Activated CD4-positive, alpha-beta memory T cell treated with anti-CD3 and anti-CD28 coated beads for 36 hours (primary cell): ENCODE measurements at regions of chr13 and their contacts with region 1.

Region 1: GRCh38 chr13:74133657-74134201 is 475 bp downstream of the KLF12 start:
- DNase-seq: peak; percentile 91
- H3K4me3 Mint-ChIP-seq: peak overlapping the region; percentile 100
- H3K27ac Mint-ChIP-seq: peak overlapping the region; percentile 100
- H3K4me1 Mint-ChIP-seq: peaks cover 30% of the 10 kb centered on the region
- H3K27me3 Mint-ChIP-seq: peaks cover 1% of the 10 kb centered on the region

Region 2: GRCh38 chr13:72781451-72782439 is 1352.0 kb before region 1 on chr13 and contains the starts of genes DIS3 and PIBF1:
- CTCF ChIA-PET with region 1: no interaction called
- POLR2A ChIA-PET with region 1: no interaction called
- intact Hi-C with region 1: loop called (anchors 5 kb)
- DNase-seq: peak; percentile 99
- H3K4me3 Mint-ChIP-seq: peak within 1 kb of the TSS; percentile 99
- H3K27ac Mint-ChIP-seq: peak within 1 kb of the TSS; percentile 100
- H3K4me1 Mint-ChIP-seq: peaks cover 55% of the 10 kb centered on the region
- H3K27me3 Mint-ChIP-seq: no peaks in the 10 kb centered on the region
- total RNA-seq, gene DIS3: 48.2 to 49.5 TPM
- total RNA-seq, gene PIBF1: 24.3 to 24.7 TPM

Region 3: GRCh38 chr13:73765651-73766384 is 367.9 kb before region 1 on chr13:
- CTCF ChIA-PET with region 1: no interaction called
- POLR2A ChIA-PET with region 1: no interaction called
- intact Hi-C with region 1: loop called (anchors 1 kb)
- DNase-seq: peak; percentile 85
- H3K4me3 Mint-ChIP-seq: peak overlapping the region; percentile 69
- H3K27ac Mint-ChIP-seq: peak overlapping the region; percentile 92
- H3K4me1 Mint-ChIP-seq: peaks cover 66% of the 10 kb centered on the region
- H3K27me3 Mint-ChIP-seq: no peaks in the 10 kb centered on the region

Region 4: GRCh38 chr13:73938375-73939070 is 195.2 kb before region 1 on chr13:
- CTCF ChIA-PET with region 1: no interaction called
- POLR2A ChIA-PET with region 1: no interaction called
- intact Hi-C with region 1: loop called (anchors 2 kb)
- DNase-seq: no peak
- H3K4me3 Mint-ChIP-seq: no peak overlapping the region
- H3K27ac Mint-ChIP-seq: no peak overlapping the region
- H3K4me1 Mint-ChIP-seq: peaks cover 77% of the 10 kb centered on the region
- H3K27me3 Mint-ChIP-seq: no peaks in the 10 kb centered on the region

Region 5: GRCh38 chr13:74062933-74063332 is 70.8 kb before region 1 on chr13:
- CTCF ChIA-PET with region 1: interaction called, 3 read pairs
- POLR2A ChIA-PET with region 1: interaction called, 15 read pairs
- intact Hi-C with region 1: loop called (anchors 1 kb)
- DNase-seq: peak; percentile 75
- H3K4me3 Mint-ChIP-seq: peak overlapping the region; percentile 72
- H3K27ac Mint-ChIP-seq: peak overlapping the region; percentile 94
- H3K4me1 Mint-ChIP-seq: peaks cover 84% of the 10 kb centered on the region
- H3K27me3 Mint-ChIP-seq: no peaks in the 10 kb centered on the region

Region 6: DNA sequence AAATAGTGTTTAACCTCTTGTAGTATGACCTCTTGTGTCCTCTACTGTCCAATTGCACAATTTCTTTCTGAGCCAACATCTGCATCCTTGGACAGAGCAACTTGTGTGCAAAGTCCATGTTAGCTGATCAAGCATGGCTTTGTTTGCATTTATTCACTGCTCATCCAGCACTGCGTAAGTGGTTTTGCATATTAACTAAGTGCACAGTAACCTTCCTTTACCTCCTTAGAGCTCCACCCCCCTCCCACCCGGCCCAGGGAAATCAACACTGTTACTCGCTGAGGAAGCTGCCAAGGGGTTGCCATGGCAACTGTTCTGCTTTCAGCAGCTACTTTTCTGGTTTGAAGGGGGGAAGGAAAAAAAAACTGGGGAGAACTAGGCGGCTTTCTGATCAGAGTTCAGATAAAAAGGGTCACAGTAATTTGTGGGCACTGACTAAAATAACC is 154.0 kb after region 1 on chr13:
- CTCF ChIA-PET with region 1: interaction called, 18 read pairs
- POLR2A ChIA-PET with region 1: interaction called, 21 read pairs
- intact Hi-C with region 1: loop called (anchors 1 kb)
- DNase-seq: peak; percentile 88
- H3K4me3 Mint-ChIP-seq: peak overlapping the region; percentile 59
- H3K27ac Mint-ChIP-seq: peak overlapping the region; percentile 30
- H3K4me1 Mint-ChIP-seq: peaks cover 66% of the 10 kb centered on the region
- H3K27me3 Mint-ChIP-seq: no peaks in the 10 kb centered on the region